ENCODE measurements at regions of chr3 and their contacts with region 1.

Region 1: GRCh38 chr3:138594150-138594934 is at the start of gene CEP70:
- DNase-seq: peak; percentile 92
- H3K4me3 Mint-ChIP-seq: peak within 1 kb of the TSS; percentile 81
- H3K27ac Mint-ChIP-seq: peak within 1 kb of the TSS; percentile 86
- H3K4me1 Mint-ChIP-seq: peaks cover 3% of the 10 kb centered on the region
- H3K27me3 Mint-ChIP-seq: no peaks in the 10 kb centered on the region
- total RNA-seq, gene CEP70: 8.3 to 8.4 TPM

Region 2: DNA sequence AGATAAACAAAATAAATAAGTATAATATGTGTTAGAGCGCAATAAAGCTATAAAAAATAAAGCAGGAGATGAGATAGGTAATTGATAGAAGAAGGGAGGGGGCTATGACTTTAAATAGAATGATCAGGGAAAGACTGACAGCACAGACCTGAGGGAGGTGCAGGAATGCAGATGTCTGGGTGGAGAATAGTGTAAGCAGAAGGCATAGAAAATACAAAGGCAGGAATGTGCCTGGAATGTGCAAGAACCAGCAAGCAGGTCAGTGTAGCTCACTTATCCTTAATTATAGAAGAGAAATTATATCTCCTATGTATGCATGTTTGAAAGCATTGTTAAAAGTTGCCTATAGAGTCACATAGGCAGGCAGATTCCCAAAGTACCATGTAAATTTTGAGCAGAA is 1069.6 kb before region 1 on chr3:
- CTCF ChIA-PET with region 1: no interaction called
- POLR2A ChIA-PET with region 1: no interaction called
- intact Hi-C with region 1: no loop called
- DNase-seq: no peak
- H3K4me3 Mint-ChIP-seq: no peak overlapping the region
- H3K27ac Mint-ChIP-seq: no peak overlapping the region
- H3K4me1 Mint-ChIP-seq: no peaks in the 10 kb centered on the region
- H3K27me3 Mint-ChIP-seq: no peaks in the 10 kb centered on the region

Region 3: GRCh38 chr3:138329127-138329983 is 265.0 kb before region 1 on chr3 and contains the start of gene NME9:
- CTCF ChIA-PET with region 1: interaction called, 5 read pairs
- POLR2A ChIA-PET with region 1: no interaction called
- intact Hi-C with region 1: loop called (anchors 5 kb)
- DNase-seq: peak; percentile 93
- H3K4me3 Mint-ChIP-seq: peak within 1 kb of the TSS; percentile 89
- H3K27ac Mint-ChIP-seq: peak within 1 kb of the TSS; percentile 80
- H3K4me1 Mint-ChIP-seq: peaks cover 28% of the 10 kb centered on the region
- H3K27me3 Mint-ChIP-seq: no peaks in the 10 kb centered on the region
- total RNA-seq, gene NME9: 0.58 to 0.90 TPM

Region 4: GRCh38 chr3:138567401-138567800 is 26.9 kb before region 1 on chr3:
- CTCF ChIA-PET with region 1: interaction called, 4 read pairs
- POLR2A ChIA-PET with region 1: interaction called, 8 read pairs
- intact Hi-C with region 1: loop called (anchors 1 kb)
- DNase-seq: no peak
- H3K4me3 Mint-ChIP-seq: no peak overlapping the region
- H3K27ac Mint-ChIP-seq: no peak overlapping the region
- H3K4me1 Mint-ChIP-seq: peaks cover 8% of the 10 kb centered on the region
- H3K27me3 Mint-ChIP-seq: no peaks in the 10 kb centered on the region

Region 5: DNA sequence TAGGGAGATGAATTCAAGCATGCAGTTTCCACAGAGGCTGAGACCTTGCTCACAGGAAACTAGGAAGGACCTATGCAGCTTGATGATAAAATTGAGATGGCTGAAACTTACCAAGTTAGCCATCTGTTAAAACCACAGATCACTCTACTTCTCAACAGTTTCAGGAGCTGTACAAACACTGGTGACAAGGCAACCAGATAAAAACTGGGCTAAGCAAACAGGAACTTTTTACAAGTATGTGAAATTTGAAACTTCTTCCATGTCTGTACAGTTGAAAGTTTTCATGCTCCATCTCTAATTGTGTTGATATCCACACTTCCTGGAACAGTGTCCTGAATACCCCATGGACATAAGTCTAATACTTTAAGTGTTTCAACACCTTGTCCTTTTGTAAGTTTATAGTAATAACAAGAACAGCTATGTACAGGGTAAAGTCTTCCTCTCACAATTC is 92.5 kb after region 1 on chr3:
- CTCF ChIA-PET with region 1: interaction called, 5 read pairs
- POLR2A ChIA-PET with region 1: interaction called, 5 read pairs
- intact Hi-C with region 1: loop called (anchors 5 kb)
- DNase-seq: no peak
- H3K4me3 Mint-ChIP-seq: no peak overlapping the region
- H3K27ac Mint-ChIP-seq: peak overlapping the region; percentile 73
- H3K4me1 Mint-ChIP-seq: peaks cover 13% of the 10 kb centered on the region
- H3K27me3 Mint-ChIP-seq: no peaks in the 10 kb centered on the region

Region 6: DNA sequence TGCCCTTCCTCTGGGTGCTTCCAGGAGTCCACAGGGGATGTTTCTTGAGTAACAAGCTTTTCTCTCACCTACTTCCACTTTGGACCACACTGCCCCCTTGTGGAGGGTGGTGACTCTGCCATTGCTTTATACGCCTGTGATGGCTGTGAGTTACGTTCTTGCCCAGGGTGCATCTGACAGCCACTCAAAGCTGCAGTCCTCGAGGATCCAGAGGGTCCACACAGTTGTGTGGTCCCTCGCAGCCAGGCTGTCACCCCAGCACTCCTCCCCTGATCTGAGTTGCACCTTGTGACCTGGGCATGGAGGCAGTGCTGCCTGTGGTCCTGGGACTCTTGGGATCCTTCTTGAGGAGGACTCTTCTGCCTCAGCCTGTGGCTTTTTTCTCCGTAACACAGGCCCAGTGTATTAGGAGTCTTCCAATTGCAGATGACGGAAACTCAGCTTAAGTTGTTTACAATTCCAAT is 329.2 kb after region 1 on chr3:
- CTCF ChIA-PET with region 1: interaction called, 62 read pairs
- POLR2A ChIA-PET with region 1: interaction called, 3 read pairs
- intact Hi-C with region 1: loop called (anchors 1 kb)
- DNase-seq: peak; percentile 89
- H3K4me3 Mint-ChIP-seq: no peak overlapping the region
- H3K27ac Mint-ChIP-seq: no peak overlapping the region
- H3K4me1 Mint-ChIP-seq: no peaks in the 10 kb centered on the region
- H3K27me3 Mint-ChIP-seq: peaks cover 2% of the 10 kb centered on the region